ENCODE measurements at regions of chr3 and their contacts with region 1.

Region 1: DNA sequence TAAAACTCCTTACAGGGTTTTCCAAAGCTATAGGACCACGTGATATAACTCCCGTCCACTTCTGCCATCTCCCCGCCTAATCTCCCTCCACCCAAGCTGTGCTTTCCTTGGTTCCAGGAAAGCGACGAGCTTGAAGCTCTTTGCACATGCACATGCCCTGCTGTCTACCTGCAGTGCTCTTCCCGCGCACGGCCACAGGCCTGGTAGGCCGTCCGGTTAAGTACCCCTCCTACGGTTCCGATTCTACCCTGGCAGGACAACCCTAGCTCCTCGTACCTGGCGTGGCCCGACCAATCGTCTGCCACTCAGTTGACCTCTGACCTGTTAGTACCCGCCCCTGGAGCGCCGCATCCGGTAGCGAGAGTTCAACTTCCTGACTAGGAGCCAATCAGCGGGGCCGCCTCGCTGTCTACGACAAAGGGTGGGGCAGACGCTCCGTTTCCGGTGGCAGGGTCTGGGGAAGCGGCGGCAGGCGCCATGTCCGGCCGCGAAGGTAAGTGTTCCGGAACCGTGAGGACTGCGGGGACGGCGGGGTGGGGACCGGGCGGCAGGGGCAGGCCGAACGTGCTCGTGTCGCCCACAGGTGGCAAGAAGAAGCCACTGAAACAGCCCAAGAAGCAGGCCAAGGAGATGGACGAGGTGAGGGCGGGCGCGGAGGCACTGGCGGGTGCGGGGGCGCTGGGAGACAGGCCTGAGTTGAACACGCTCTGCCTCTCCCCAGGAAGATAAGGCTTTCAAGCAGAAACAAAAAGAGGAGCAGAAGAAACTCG is at the starts of genes CCDC51 and TMA7:
- DNase-seq: peak; percentile 96
- ATAC-seq: peak; percentile 95
- H3K4me3 Mint-ChIP-seq: peak within 1 kb of the TSS; percentile 98
- H3K27ac Mint-ChIP-seq: peak within 1 kb of the TSS; percentile 95
- H3K4me1 Mint-ChIP-seq: peaks cover 45% of the 10 kb centered on the region
- H3K27me3 Mint-ChIP-seq: no peaks in the 10 kb centered on the region
- CTCF ChIP-seq: no peak
- total RNA-seq, gene CCDC51: 8.7 and 8.8 TPM in 2 replicates
- total RNA-seq, gene TMA7: 216 and 296 TPM in 2 replicates

Region 2: DNA sequence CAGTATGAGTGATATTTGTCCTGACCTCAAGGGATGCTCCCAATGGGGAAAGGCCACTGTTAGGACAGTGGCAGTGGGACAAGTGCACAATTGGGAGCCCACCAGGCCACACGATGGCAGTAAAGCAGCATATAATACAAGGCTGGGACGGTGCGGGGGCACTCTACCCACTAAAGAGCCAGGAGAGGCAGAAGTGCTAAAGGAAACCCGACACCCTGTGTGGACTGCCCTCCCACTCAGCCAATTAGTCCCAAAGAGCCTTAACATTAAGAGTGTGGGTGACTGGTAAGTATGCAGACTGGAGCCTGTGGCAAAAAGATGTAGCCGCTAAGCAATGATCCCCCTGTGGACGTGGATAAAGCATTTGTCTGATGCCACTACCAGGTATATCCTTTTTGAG is 207.3 kb before region 1 on chr3:
- CTCF ChIA-PET with region 1: interaction called, 20 read pairs
- POLR2A ChIA-PET with region 1: no interaction called
- intact Hi-C with region 1: loop called (anchors 1 kb)
- DNase-seq: peak; percentile 34
- ATAC-seq: peak; percentile 98
- H3K4me3 Mint-ChIP-seq: peak overlapping the region; percentile 32
- H3K27ac Mint-ChIP-seq: peak overlapping the region; percentile 19
- H3K4me1 Mint-ChIP-seq: peaks cover 27% of the 10 kb centered on the region
- H3K27me3 Mint-ChIP-seq: no peaks in the 10 kb centered on the region
- CTCF ChIP-seq: no peak

Region 3: DNA sequence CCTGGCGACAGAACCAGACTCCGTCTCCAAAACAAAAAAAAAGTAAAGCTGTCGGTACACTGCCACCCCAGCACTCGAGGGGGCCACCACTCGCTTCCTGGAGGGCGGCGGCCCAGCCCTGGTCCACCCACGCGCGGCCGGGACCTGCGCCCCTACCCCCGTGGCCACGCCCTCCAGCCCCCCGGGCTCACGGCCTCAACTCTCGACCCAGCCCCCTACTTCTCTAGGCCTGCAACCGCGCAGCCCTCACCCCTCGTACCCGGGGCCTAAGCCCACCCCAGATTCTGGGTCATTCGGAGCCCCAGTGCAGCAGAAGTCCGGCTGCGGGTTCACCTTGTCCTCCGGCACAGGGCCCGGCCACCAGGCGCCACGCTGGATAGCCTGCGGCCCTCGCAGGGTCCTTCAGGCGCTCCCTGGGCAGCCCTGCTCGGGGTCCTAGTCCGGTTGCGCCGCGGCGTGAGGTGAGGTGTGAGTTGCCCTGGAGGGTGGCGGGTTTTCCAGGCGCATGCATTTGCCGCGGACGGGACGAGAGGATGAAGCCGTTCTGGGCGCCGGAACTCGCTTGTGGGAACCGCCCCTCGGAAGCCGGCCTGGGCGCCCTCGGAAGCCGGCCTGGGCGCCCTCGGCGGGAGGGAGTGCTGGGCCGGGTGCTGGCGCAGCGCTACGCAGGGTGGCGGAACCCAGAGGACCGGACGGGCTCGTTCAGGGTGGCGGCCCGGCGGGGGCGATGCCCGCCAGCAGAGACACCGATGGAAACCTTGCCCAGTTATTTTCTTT is 138.8 kb before region 1 on chr3:
- CTCF ChIA-PET with region 1: interaction called, 14 read pairs
- POLR2A ChIA-PET with region 1: interaction called, 10 read pairs
- intact Hi-C with region 1: loop called (anchors 2 kb)
- DNase-seq: peak; percentile 95
- ATAC-seq: peak; percentile 91
- H3K4me3 Mint-ChIP-seq: peak within 1 kb of the TSS; percentile 97
- H3K27ac Mint-ChIP-seq: peak within 1 kb of the TSS; percentile 98
- H3K4me1 Mint-ChIP-seq: peaks cover 42% of the 10 kb centered on the region
- H3K27me3 Mint-ChIP-seq: no peaks in the 10 kb centered on the region
- CTCF ChIP-seq: no peak

Region 4: DNA sequence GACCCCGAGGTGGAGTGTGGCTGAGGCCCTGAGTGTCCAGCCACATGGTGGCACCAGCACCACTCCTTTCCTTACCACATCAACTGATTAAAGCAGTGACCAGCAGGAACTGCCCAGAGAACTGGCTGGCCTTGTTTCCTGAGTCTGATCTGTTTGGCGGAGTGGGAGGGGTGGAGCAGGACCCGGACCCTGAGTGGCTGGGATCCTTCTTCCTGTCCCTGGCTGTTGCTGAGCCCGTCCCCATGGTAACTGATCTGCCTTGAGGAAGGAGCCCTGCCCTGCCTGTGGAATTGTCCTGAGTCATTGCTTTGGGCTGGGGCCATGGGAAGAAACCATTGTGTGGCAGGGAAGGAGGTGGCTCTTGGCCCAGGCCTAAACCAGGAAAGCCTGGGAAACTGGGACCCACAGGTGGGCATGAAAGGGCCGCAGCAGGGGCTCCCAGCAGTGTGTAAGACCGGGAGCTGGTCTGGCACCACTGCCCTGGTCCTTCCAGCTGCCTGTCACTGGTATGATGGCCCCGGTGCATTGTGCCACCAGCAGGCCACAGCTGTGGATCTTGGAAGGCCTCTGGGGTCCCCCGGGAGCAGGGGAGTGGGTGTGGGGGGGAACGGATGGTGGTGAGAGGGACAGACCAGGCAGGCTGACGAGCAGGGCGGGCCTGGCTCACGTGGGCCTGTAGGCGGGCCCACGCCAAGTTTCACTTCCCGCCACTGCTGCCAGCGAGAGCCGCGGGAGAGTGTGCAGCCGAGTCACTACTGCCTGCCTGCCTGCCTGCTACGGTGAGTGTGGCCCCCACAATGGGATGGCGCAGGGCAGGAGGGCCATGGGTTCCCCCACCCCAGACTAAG is 25.8 kb after region 1 on chr3:
- CTCF ChIA-PET with region 1: interaction called, 10 read pairs
- POLR2A ChIA-PET with region 1: interaction called, 22 read pairs
- intact Hi-C with region 1: no loop called
- DNase-seq: peak; percentile 86
- ATAC-seq: peak; percentile 95
- H3K4me3 Mint-ChIP-seq: peak overlapping the region; percentile 89
- H3K27ac Mint-ChIP-seq: peak overlapping the region; percentile 96
- H3K4me1 Mint-ChIP-seq: peaks cover 55% of the 10 kb centered on the region
- H3K27me3 Mint-ChIP-seq: no peaks in the 10 kb centered on the region
- CTCF ChIP-seq: no peak

Region 5: DNA sequence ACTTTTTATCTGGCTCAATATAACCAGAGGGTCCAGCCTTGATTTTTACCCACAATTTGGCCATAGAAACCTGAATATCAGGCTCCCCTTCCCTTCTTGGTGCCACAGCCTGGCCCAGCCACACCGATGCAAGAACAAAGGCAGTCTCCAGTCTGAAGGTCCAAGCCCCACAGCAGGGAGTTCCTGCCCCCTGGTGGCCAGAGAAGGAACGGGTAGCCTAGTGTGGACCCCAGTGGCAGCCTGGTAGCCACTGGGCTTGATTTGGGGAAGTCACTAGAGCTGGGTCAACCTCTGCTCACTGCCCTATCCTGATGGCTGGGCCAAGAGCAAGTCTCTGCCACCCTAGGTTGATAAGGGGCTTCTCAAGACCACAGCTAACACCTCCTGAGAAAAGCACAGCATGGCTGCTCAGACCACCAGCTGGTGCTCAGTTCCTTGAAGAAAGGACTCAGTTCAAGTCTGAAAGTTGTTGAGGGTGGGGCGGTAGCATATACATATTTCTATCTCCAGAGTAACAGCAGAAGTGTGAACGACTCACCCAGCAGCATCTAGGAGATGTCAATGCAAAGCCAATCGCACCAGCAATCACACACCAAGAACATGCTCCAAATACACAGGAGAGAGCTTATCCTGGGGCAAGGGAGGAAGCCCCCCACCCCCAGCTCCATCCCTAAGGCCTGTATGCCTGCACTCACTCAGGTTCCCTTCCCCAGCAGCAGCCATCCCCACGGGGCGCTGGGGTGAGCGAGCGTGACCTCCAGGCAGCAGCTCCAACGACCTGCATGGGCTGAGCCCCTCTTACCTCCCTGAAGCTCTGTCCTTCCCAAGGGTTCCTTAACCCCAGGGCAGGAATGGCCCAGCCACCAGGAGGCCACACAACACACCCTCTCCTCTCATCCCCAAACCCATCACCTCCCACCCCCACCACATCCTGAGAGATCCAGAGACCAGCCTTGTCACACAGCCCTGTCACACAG is 109.0 kb after region 1 on chr3:
- CTCF ChIA-PET with region 1: interaction called, 24 read pairs
- POLR2A ChIA-PET with region 1: interaction called, 3 read pairs
- intact Hi-C with region 1: loop called (anchors 2 kb)
- DNase-seq: peak; percentile 66
- ATAC-seq: peak; percentile 100
- H3K4me3 Mint-ChIP-seq: no peak overlapping the region
- H3K27ac Mint-ChIP-seq: no peak overlapping the region
- H3K4me1 Mint-ChIP-seq: no peaks in the 10 kb centered on the region
- H3K27me3 Mint-ChIP-seq: no peaks in the 10 kb centered on the region
- CTCF ChIP-seq: no peak